PC-9 (cell line): ENCODE measurements at regions of chr19 and their contacts with region 1.

Region 1: DNA sequence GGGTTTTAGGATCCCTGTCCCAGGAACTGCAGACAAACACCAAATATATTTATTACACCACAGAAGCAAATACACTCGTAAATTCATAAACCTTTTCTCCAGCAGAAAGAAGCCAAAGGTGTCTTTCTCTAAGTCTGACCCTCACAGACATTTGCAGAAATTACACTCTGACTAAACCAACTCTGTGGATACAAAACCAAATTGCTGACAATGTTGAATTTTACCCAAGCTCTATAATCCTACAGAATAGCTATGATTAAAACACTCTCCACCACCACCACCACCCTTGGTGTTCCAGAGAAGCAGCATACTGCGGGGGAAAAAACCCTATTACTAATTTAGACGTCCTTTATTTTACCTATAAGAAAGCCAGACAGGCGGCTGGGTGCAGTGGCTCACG is 5.2 kb downstream of the ZNF564 start:
- DNase-seq: no peak
- H3K4me3 ChIP-seq: no peak overlapping the region
- H3K27ac ChIP-seq: no peak overlapping the region
- H3K4me1 ChIP-seq: peaks cover 11% of the 10 kb centered on the region
- H3K27me3 ChIP-seq: no peaks in the 10 kb centered on the region
- CTCF ChIP-seq: no peak

Region 2: DNA sequence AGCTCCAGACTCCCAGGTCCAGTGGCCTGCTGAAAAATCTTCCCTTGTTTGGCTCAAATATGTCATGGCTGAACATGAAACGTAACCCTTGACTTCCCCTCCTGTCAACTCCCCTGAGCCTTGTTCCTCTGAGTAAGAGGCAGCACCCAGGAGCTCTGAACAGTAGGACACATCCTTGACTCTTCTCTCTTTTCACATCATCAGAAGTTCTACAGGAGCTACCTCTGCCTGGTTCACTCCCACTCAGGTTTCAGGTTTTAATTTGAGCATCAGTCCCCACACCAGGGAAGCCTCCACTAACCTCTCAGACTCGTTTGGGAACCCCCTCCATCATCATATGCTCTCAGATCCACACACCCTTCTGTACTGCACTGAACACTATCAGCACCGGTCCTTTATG is 837.6 kb before region 1 on chr19:
- CTCF ChIA-PET with region 1: no interaction called
- POLR2A ChIA-PET with region 1: interaction called, 10 read pairs
- intact Hi-C with region 1: no loop called
- DNase-seq: peak in 1 of 2 experiments; percentile 29
- H3K4me3 ChIP-seq: no peak overlapping the region
- H3K27ac ChIP-seq: no peak overlapping the region
- H3K4me1 ChIP-seq: no peaks in the 10 kb centered on the region
- H3K27me3 ChIP-seq: no peaks in the 10 kb centered on the region
- CTCF ChIP-seq: no peak